ENCODE measurements at regions of chr1 and their contacts with region 1.

Region 1: GRCh38 chr1:209576798-209577197 is 6.7 kb upstream of the CAMK1G start:
- DNase-seq: peak in 1 of 2 donors; percentile 83
- H3K4me3 ChIP-seq: no peak overlapping the region
- H3K27ac ChIP-seq: no peak overlapping the region
- H3K4me1 ChIP-seq: no peaks in the 10 kb centered on the region
- H3K27me3 ChIP-seq: no peaks in the 10 kb centered on the region
- CTCF ChIP-seq: peak; percentile 70 to 90 (median 86)

Region 2: DNA sequence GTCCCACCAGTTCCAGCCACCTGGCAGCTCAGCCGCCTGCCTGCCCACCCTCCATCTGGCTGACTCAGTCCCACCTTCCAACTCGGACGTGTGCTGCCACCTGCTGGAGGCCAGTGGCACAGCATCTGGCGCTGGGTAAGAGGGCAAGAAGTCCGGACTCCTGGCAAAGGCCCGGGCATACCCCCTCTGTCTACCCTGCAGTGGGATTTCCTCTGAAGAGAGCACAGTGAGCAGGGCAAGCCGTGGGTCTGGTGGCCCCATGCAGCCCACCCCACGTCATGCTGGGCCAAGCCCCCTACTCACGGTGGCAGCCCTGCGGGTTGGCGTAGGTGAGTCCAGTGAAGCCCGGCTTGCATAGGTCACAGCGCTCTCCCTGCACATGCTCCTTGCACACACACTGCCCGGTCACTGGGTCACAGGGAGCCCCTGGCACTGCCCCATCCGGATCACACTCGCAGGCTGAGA is 51.0 kb after region 1 on chr1:
- intact Hi-C with region 1: loop called (anchors 2 kb)
- DNase-seq: peak in 1 of 2 donors; percentile 84
- H3K4me3 ChIP-seq: no peak overlapping the region
- H3K27ac ChIP-seq: no peak overlapping the region
- H3K4me1 ChIP-seq: peaks cover 3 to 19% of the 10 kb centered on the region in 2 donors
- H3K27me3 ChIP-seq: no peaks in the 10 kb centered on the region
- CTCF ChIP-seq: peak; percentile 71 to 93 (median 92)

Region 3: GRCh38 chr1:209692745-209693504 is 116.1 kb after region 1 on chr1:
- intact Hi-C with region 1: loop called (anchors 1 kb)
- DNase-seq: peak in 1 of 2 donors; percentile 72
- H3K4me3 ChIP-seq: no peak overlapping the region
- H3K27ac ChIP-seq: no peak overlapping the region
- H3K4me1 ChIP-seq: no peaks in the 10 kb centered on the region
- H3K27me3 ChIP-seq: no peaks in the 10 kb centered on the region
- CTCF ChIP-seq: peak; percentile 72 to 91 (median 73)

Region 4: DNA sequence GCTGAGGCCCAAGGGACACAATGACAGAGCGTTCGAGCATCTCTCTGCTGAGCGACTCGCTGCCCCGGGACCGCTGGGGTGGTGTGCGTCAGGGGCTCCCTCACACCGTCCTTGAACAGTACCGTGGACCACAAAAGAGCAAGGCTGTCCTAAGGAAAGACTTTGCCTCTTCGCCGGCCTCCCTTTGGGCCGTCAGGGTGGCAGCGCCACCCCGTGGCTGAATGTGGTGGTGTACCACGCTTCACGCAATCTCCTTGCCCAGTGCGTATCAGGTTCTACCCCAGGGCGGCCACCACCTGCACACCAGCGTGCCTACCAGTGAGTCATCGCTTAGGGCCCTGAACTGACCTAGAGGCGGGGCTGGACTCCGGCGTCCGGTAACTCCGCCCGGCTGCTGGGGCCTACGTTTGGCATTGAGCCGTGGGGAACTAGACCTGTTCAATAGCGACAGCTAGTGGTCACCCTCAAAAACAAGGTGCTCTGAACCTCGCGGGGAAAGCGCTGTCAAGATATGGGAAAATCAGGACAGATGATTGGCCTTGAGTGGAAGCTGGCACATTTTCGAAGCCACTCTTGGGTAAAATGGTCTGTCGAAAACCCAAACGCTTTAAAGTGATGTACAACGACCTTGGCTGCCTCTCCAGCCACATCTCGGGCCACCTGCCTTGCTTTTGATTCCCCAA is 170.9 kb after region 1 on chr1:
- intact Hi-C with region 1: loop called (anchors 2 kb)
- DNase-seq: peak; percentile 81 to 95
- H3K4me3 ChIP-seq: peak overlapping the region; percentile 20 to 40
- H3K27ac ChIP-seq: peak overlapping the region; percentile 1 to 14
- H3K4me1 ChIP-seq: no peaks in the 10 kb centered on the region
- H3K27me3 ChIP-seq: no peaks in the 10 kb centered on the region
- CTCF ChIP-seq: peak; percentile 77 to 93 (median 86)

Region 5: DNA sequence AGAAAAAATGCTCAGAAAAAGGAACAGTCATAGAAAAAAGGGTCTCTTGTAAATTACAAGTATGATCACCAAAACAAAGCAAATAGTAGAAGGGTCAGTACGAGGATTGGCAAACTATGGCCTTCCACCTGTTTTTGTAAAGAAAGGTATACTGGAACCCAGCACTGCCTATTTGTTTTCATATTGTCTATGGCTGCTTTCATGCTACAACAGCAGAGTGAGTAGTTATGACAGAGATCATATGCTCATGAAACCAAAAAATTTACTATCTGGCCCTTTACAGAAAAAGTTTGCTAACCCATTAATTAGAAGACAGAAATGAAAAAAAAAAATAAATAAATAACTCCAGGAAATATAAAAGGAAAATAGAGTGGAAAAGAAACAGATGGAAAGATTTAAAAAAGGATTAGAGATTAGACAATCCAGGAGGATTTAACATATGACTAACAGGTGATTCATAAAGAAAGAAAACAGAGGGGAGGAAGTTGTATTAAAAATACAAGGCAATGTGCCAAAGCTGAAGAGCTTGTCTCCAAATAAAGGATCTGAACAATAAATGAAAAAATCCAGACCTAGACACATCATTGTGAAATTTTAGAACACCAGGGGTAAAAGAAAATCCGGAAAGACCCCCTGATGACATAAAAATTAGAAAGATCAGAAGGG is 547.3 kb after region 1 on chr1:
- intact Hi-C with region 1: no loop called
- DNase-seq: no peak
- H3K4me3 ChIP-seq: no peak overlapping the region
- H3K27ac ChIP-seq: no peak overlapping the region
- H3K4me1 ChIP-seq: no peaks in the 10 kb centered on the region
- H3K27me3 ChIP-seq: no peaks in the 10 kb centered on the region
- CTCF ChIP-seq: no peak

Measured in ascending aorta (tissue), 2 donors.